AG04449 (cell line): ENCODE measurements at regions of chr9 and their contacts with region 1.

Region 1: GRCh38 chr9:123360161-123361085 is 4.4 kb downstream of the CRB2 start:
- DNase-seq: no peak
- H3K4me3 ChIP-seq: no peak overlapping the region
- CTCF ChIP-seq: no peak

Region 2: GRCh38 chr9:123383512-123384170 is 23.2 kb after region 1 on chr9:
- CTCF ChIA-PET with region 1: interaction called, 217 read pairs
- POLR2A ChIA-PET with region 1: no interaction called
- DNase-seq: no peak
- H3K4me3 ChIP-seq: no peak overlapping the region
- CTCF ChIP-seq: no peak